H1 (cell line): ENCODE measurements at regions of chr11 and their contacts with region 1.

Region 1: DNA sequence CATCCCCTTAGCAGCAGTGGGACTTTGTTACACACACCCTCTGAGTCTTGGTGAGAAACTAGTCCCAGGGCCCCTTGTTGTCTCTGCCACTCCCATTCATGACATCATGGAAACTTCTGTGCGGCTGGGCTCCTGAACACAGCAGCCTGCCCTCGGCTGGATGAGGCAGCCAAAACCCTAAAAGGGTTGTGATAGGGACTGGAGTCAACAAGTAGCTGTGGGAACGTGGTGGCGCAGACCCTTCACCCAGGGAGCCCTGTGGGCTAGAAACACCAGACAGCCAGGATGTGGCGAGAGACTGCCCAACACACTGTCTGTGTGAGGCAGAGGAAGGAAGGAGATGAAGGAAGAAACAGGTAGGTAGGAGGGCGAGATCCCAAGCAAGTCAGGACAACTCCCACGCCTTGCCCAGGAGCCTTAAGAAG is 3.9 kb downstream of the CD3D start:
- DNase-seq: no peak
- H3K4me3 ChIP-seq: no peak overlapping the region
- H3K27ac ChIP-seq: no peak overlapping the region
- H3K4me1 ChIP-seq: no peaks in the 10 kb centered on the region
- H3K27me3 ChIP-seq: no peaks in the 10 kb centered on the region; a peak in 1 of 7 replicates
- CTCF ChIP-seq: no peak
- EP300 ChIP-seq: no peak
- POLR2A ChIP-seq: no peak
- RAD21 ChIP-seq: no peak

Region 2: GRCh38 chr11:118353084-118353710 is 14.5 kb after region 1 on chr11:
- CTCF ChIA-PET with region 1: interaction called, 24 read pairs
- POLR2A ChIA-PET with region 1: interaction called, 6 read pairs
- DNase-seq: no peak
- H3K4me3 ChIP-seq: no peak overlapping the region
- H3K27ac ChIP-seq: no peak overlapping the region
- H3K4me1 ChIP-seq: no peaks in the 10 kb centered on the region
- H3K27me3 ChIP-seq: peaks cover 0 to 3% (median 1%) of the 10 kb centered on the region in 4 experiments; a peak in 2 of 7 replicates
- CTCF ChIP-seq: peak in 1 of 3 experiments; percentile 13; a peak in 2 of 4 replicates
- EP300 ChIP-seq: no peak
- POLR2A ChIP-seq: no peak
- RAD21 ChIP-seq: peak in 1 of 2 experiments; percentile 28

Region 3: DNA sequence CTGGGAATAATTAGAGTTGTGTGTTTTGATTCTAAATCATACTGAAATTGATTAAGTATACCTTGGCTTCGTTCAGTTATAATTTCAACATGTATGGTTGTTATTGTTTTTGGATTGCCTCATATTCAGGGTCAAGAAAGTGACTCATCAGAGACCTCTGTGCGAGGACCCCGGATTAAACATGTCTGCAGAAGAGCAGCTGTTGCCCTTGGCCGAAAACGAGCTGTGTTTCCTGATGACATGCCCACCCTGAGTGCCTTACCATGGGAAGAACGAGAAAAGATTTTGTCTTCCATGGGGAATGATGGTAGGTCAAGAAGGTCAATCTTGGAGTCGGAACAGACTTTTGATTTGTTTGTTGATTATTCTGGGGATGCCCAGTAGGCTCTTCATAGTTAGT is 138.0 kb after region 1 on chr11:
- CTCF ChIA-PET with region 1: no interaction called
- POLR2A ChIA-PET with region 1: no interaction called
- DNase-seq: no peak
- H3K4me3 ChIP-seq: no peak overlapping the region
- H3K27ac ChIP-seq: no peak overlapping the region
- H3K4me1 ChIP-seq: no peaks in the 10 kb centered on the region
- H3K27me3 ChIP-seq: no peaks in the 10 kb centered on the region
- CTCF ChIP-seq: no peak
- EP300 ChIP-seq: no peak
- POLR2A ChIP-seq: no peak
- RAD21 ChIP-seq: no peak